Heart left ventricle (tissue), 16 donors: ENCODE measurements at regions of chr1 and their contacts with region 1.

Region 1: DNA sequence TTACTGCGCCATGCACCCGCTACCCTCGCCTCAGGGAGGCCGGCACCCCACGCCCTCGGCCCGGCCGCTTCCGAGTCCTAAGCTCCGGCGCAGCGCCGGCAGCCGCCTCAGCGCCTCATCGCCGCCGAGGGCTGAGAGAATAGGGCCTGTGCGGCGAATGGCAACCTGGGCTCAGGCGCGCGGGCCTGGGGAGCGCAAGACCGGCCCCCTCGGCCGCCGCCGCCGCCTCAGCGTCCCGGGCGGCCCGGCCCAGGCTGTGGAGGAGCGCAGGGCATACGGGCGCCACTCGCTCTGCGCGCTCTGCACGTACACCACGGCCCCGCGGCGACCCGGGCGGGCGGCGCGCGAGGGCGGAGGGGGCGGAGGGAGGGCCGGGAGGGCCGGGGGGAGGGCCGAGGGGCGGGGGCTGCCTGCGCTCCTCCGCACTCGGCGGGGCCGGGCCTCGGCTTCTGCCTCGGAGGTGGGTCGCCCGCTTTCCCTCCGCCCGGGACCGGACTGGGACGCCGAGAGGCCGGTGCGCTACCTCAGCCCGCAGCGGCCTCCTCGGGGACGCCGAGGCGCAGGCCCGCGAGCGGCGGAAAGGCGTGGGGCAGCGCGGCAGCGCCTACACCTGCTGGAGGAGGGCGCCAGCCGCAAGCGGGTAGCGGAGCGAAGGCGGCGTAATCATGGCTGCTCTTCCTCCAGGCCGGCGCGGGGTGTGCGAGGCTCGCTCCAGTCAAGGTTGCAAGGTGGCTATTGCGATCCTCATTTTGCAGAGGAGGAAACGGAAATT is at the start of gene EGLN1:
- DNase-seq: peak; percentile 90 to 94 (median 91)
- ATAC-seq: peak; percentile 71 to 96 (median 88)
- H3K4me3 ChIP-seq: peak within 1 kb of the TSS; percentile 76 to 97 (median 84)
- H3K27ac ChIP-seq: peak within 1 kb of the TSS; percentile 89 to 100 (median 99)
- H3K4me1 ChIP-seq: peaks cover 0 to 55% (median 36%) of the 10 kb centered on the region in 12 donors
- H3K27me3 ChIP-seq: no peaks in the 10 kb centered on the region
- CTCF ChIP-seq: peak in 6 of 12 donors; percentile 16 to 51 (median 33)
- POLR2A ChIP-seq: peak in 1 of 2 donors; percentile 85
- total RNA-seq, gene EGLN1: 51.6 to 122 (median 77.8) TPM

Region 2: GRCh38 chr1:230820568-230820967 is 601.6 kb before region 1 on chr1:
- intact Hi-C with region 1: no loop called
- DNase-seq: no peak
- ATAC-seq: no peak
- H3K4me3 ChIP-seq: no peak overlapping the region
- H3K27ac ChIP-seq: peak overlapping the region in 1 of 12 donors; percentile 2
- H3K4me1 ChIP-seq: peaks cover 0 to 66% (median 38%) of the 10 kb centered on the region in 12 donors
- H3K27me3 ChIP-seq: no peaks in the 10 kb centered on the region
- CTCF ChIP-seq: no peak
- POLR2A ChIP-seq: no peak

Region 3: DNA sequence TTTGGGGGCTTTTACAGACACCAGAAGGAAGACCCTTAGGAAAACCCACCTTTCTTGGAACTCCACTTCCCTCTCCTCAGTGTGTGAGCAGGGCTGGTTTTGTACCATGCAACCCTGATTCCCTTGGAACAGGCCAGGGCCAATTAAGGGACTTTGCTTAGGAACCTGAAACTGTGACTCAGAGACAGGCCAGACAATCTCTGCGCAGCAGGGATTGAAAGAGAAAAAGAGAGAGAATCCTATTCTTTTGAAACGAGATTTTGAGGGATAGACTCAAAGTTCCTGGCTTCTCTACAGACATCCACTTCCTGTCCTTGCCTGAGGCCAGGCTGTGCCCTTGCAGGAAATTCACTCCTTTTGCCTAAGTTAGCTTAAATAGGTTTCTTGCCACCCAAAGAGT is 530.8 kb before region 1 on chr1:
- intact Hi-C with region 1: no loop called
- DNase-seq: no peak
- ATAC-seq: no peak
- H3K4me3 ChIP-seq: no peak overlapping the region
- H3K27ac ChIP-seq: no peak overlapping the region
- H3K4me1 ChIP-seq: no peaks in the 10 kb centered on the region
- H3K27me3 ChIP-seq: no peaks in the 10 kb centered on the region
- CTCF ChIP-seq: no peak
- POLR2A ChIP-seq: no peak

Region 4: DNA sequence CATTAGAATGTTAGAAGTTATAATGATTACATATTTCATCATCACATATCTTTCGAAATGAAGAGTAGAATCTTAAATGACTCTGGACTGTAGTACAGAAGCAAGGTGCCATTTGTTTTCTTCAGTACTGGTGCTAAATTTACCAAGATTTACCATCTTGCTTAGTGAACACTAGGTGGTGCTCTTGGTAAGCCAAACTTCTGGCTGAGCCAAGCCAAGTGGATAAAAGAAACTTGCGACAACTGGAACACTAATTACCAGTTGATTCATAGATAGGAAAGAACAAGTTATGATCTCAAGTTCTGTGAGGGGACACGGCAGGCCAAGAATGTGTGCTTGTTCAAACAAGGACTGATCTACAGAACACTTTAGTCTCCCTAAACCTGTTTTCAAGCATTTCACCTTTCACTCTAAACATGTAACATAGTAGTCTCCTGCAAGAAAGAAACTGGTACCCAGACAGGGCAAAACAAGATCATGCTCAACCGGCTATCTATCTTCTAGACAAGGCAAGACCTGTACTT is 64.3 kb before region 1 on chr1:
- intact Hi-C with region 1: loop called in 5 of 10 experiments (anchors 2 to 10 kb)
- DNase-seq: peak in 2 of 5 donors; percentile 35 to 43
- ATAC-seq: peak; percentile 38 to 78 (median 71)
- H3K4me3 ChIP-seq: no peak overlapping the region
- H3K27ac ChIP-seq: peak overlapping the region in 5 of 12 donors; percentile 20 to 66 (median 35)
- H3K4me1 ChIP-seq: peaks cover 0 to 23% (median 9%) of the 10 kb centered on the region in 12 donors
- H3K27me3 ChIP-seq: no peaks in the 10 kb centered on the region
- CTCF ChIP-seq: peak; percentile 61 to 91 (median 82)
- POLR2A ChIP-seq: no peak

Region 5: GRCh38 chr1:231376875-231377549 is 45.2 kb before region 1 on chr1:
- intact Hi-C with region 1: loop called in 7 of 10 experiments (anchors 5 kb)
- DNase-seq: no peak
- ATAC-seq: peak in 2 of 4 donors; percentile 45 to 58
- H3K4me3 ChIP-seq: no peak overlapping the region
- H3K27ac ChIP-seq: peak overlapping the region in 3 of 12 donors; percentile 5 to 22 (median 8)
- H3K4me1 ChIP-seq: peaks cover 3 to 62% (median 46%) of the 10 kb centered on the region in 12 donors
- H3K27me3 ChIP-seq: no peaks in the 10 kb centered on the region
- CTCF ChIP-seq: no peak
- POLR2A ChIP-seq: no peak

Region 6: GRCh38 chr1:231528172-231529029 is 106.2 kb after region 1 on chr1 and contains the start of gene TSNAX:
- intact Hi-C with region 1: loop called (anchors 1 to 5 kb)
- DNase-seq: peak; percentile 92 to 95 (median 94)
- ATAC-seq: peak; percentile 98 to 99 (median 99)
- H3K4me3 ChIP-seq: peak within 1 kb of the TSS; percentile 38 to 92 (median 76)
- H3K27ac ChIP-seq: peak within 1 kb of the TSS; percentile 89 to 95 (median 92)
- H3K4me1 ChIP-seq: peaks cover under 1 to 58% (median 34%) of the 10 kb centered on the region in 12 donors
- H3K27me3 ChIP-seq: no peaks in the 10 kb centered on the region
- CTCF ChIP-seq: no peak
- POLR2A ChIP-seq: peak in 1 of 2 donors; percentile 86
- total RNA-seq, gene TSNAX: 16.6 to 43.5 (median 31.7) TPM

Region 7: DNA sequence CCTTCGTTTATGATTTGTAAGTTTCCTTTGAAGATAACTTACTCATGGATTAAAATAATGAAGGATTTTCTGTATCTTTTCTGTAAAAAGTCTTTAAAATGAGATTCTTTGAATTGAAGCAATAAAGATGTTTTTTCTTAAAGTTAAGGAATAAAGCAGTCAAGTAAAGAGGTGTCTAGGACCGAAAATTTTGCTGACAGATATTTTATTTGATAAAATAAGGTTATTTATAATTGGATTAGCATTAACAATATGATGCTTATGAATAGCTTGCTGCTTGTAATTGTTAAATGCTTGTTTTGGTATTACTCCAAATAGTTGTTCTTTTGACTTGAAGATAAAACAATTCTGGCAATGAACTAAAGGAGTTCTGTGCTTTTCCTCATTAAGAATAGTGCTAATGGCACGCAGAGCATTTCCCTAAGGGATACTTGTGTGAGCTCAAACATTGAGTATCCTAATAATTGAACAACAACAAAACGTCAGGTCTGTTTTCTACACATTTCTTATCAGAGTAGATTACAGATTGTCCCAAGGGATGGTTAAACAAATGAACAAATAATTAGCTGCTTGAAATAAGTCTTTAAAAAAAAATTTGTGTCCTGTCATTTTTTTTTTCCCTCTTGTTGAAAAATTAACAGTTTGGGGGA is 122.9 kb after region 1 on chr1:
- intact Hi-C with region 1: loop called in 1 of 10 experiments (anchors 5 kb)
- DNase-seq: no peak
- ATAC-seq: peak; percentile 52 to 92 (median 60)
- H3K4me3 ChIP-seq: no peak overlapping the region
- H3K27ac ChIP-seq: peak overlapping the region in 8 of 12 donors; percentile 7 to 50 (median 34)
- H3K4me1 ChIP-seq: peaks cover 0 to 44% (median 22%) of the 10 kb centered on the region in 12 donors
- H3K27me3 ChIP-seq: no peaks in the 10 kb centered on the region
- CTCF ChIP-seq: no peak
- POLR2A ChIP-seq: no peak

Region 8: DNA sequence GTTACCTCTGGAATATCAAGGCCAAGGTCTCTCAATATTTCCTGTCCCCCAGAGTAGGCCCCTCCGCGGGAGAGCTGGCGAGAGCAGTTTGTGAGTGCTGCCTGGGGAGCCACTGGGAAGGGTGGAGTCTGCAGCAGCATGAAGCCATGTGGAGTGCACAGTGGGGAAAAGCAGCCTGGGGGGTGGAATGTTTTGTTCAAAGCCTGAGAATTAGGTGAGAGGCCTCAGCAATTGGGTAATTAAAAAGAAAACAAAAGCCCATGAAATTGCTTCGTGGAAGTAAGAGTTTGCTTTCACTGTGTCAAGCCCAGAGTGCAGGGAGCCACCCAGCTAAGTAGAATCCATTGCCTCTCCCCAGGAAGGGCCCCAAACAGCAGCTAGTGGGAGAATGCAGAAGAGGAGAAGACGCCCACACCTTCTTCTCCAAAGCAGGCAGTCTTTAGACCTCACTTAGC is 174.2 kb after region 1 on chr1:
- intact Hi-C with region 1: loop called in 5 of 10 experiments (anchors 2 to 5 kb)
- DNase-seq: peak in 1 of 5 donors; percentile 27
- ATAC-seq: peak in 2 of 4 donors; percentile 20 to 36
- H3K4me3 ChIP-seq: no peak overlapping the region
- H3K27ac ChIP-seq: peak overlapping the region in 5 of 12 donors; percentile 18 to 61 (median 25)
- H3K4me1 ChIP-seq: peaks cover 0 to 37% (median 14%) of the 10 kb centered on the region in 12 donors
- H3K27me3 ChIP-seq: no peaks in the 10 kb centered on the region
- CTCF ChIP-seq: no peak
- POLR2A ChIP-seq: no peak

Region 9: DNA sequence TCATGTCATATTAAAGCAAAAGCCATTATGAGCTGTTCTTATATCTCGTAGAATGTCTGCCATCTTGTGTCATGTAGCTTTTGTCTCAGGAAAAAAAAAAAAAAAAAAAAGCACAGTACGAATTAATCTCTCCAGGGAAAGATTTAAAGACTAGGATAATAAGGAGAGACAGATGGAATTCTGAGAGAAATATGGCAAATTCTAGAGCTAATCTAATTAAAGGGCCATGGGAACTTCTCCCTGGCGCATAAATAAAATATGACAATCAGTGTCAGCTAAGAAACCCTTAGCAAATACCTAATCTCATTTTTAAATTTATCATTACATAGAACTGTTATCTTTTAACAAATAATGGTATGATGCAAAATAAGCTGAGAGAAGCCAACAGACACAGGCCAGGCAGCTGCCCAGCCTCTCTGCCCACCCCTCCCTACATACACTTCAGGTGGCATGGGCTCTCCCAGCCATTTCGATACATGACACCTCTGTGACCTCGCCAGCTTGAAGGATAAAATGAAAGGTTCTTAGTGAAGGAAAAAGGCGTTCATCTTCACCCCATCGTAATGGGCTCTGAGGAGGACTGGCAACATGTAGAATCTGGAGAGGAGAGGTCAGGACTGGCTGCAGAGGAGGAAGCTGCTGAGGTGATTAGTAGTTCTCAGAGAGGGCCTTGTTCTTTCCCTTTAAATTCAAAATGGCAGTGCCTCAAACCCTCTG is 244.2 kb after region 1 on chr1:
- intact Hi-C with region 1: no loop called
- DNase-seq: no peak
- ATAC-seq: no peak
- H3K4me3 ChIP-seq: no peak overlapping the region
- H3K27ac ChIP-seq: no peak overlapping the region
- H3K4me1 ChIP-seq: peaks cover 0 to 16% (median 0%) of the 10 kb centered on the region in 12 donors
- H3K27me3 ChIP-seq: no peaks in the 10 kb centered on the region
- CTCF ChIP-seq: no peak
- POLR2A ChIP-seq: no peak

Region 10: GRCh38 chr1:231818337-231818736 is 396.2 kb after region 1 on chr1:
- intact Hi-C with region 1: no loop called
- DNase-seq: peak in 4 of 5 donors; percentile 37 to 83 (median 56)
- ATAC-seq: peak; percentile 87 to 91 (median 88)
- H3K4me3 ChIP-seq: no peak overlapping the region
- H3K27ac ChIP-seq: peak overlapping the region; percentile 7 to 89 (median 56)
- H3K4me1 ChIP-seq: peaks cover 0 to 50% (median 12%) of the 10 kb centered on the region in 12 donors
- H3K27me3 ChIP-seq: no peaks in the 10 kb centered on the region
- CTCF ChIP-seq: no peak
- POLR2A ChIP-seq: no peak